Activated T-helper 1 cell treated with anti-CD3 and anti-CD28 coated beads, Interleukin-12 subunit alpha, Interleukin-12 subunit beta, Interleukin-2, Interleukin-4 antibody, amounts not matched to agents 30 ng/mL and 10 ng/mL and 1 ng/mL, durations not matched to agents 14 hours and 24 hours and 36 hours (primary cell): ENCODE measurements at regions of chr4 and their contacts with region 1.

Region 1: DNA sequence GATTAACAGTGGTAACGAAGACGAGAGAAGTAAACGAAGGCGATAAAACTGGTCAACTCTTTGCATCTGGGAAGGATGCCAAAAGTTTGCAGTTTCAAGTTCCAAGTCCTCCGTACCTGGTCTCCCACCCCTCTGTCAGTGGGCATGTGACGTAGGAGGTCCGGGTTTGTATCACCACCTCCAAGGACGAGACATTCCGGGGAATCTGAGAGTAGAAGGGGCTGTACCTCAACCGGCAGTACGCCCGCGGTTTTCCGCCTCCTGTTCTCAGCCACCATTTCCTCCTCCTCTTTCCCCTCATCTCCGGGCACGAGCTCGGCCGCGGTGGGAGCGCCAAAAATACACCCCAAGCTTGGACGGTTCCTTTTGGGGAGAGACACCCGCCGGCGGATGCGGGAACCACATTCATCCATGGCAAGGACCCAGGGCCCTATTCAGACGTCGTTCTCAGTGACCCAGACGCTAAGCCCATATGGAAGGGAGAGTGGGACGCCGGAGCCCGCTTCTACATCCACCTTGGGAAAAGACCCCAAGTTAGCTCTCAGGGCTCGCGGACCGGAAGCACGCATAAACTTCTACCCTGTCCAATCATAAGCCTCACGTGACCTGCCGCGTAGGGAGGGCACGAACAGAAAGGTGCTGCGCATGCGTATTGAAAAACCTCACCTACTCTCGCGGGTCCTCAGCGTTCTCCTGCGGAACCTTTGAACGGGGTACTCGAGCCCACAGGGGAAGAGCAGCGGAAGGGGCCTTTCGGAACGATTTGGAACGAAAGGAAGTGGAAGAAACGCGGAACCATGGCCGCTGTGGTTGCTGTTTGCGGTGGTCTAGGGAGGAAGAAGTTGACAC is at the starts of genes HELQ and MRPS18C:
- DNase-seq: peak; percentile 95
- H3K4me3 Mint-ChIP-seq: peak within 1 kb of the TSS; percentile 96
- H3K27ac Mint-ChIP-seq: peak within 1 kb of the TSS; percentile 98
- H3K4me1 Mint-ChIP-seq: peaks cover 45% of the 10 kb centered on the region
- H3K27me3 Mint-ChIP-seq: no peaks in the 10 kb centered on the region
- total RNA-seq, gene HELQ: 8.8 and 9.7 TPM in 2 replicates
- total RNA-seq, gene MRPS18C: 76.8 and 80.3 TPM in 2 replicates

Region 2: DNA sequence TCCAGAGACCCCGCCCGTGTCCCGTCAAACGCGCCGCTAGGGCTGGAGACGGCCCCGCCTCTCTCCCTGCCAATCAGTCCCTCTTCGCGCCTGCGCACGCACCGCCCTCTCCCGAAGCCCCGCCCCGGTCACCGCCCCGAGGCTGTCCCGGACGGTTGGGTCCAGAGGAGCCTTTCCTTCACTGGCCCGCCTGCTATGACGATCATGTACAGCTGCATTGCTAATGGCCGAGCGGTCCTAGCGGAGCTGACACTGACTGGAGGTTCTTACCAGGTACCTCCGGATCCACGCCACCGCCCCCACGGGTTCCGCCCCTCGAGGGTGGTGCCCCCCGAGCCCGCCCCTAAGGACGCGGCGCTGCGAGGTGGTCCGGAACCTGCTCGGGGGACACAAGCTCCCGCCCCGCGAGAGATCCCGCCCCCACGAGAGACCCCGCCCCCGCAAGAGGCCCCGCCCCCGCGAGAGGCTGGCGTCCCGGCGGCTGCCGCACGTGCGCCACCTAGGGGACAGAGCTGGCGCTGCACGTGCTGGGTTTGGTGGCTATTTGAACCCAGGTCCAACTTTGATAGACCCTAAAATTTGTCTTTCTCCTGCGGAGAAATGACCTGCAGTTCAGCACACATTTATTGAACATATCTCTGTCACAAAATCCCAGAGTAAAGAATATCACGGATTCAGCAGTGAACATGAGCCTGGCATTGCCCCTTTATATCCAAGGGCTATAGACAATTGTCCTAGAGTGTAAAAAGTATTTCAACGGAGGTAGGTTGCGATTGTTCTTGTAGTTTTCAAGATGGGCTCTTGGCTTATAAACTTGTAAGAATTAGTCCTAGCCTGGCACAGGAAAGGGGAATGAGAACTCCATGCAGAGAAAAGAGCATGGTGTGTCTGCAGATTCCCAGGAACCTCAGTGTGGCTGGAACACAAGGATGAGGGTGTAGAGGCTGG is 1170.4 kb before region 1 on chr4:
- intact Hi-C with region 1: loop called (anchors 10 kb)
- DNase-seq: peak; percentile 99
- H3K4me3 Mint-ChIP-seq: peak overlapping the region; percentile 80
- H3K27ac Mint-ChIP-seq: peak overlapping the region; percentile 27
- H3K4me1 Mint-ChIP-seq: peaks cover 14% of the 10 kb centered on the region
- H3K27me3 Mint-ChIP-seq: peaks cover 24% of the 10 kb centered on the region

Region 3: GRCh38 chr4:82865592-82865991 is 589.9 kb before region 1 on chr4:
- intact Hi-C with region 1: loop called (anchors 10 kb)
- DNase-seq: peak; percentile 24
- H3K4me3 Mint-ChIP-seq: no peak overlapping the region
- H3K27ac Mint-ChIP-seq: peak overlapping the region; percentile 91
- H3K4me1 Mint-ChIP-seq: peaks cover 48% of the 10 kb centered on the region
- H3K27me3 Mint-ChIP-seq: no peaks in the 10 kb centered on the region

Region 4: GRCh38 chr4:83034630-83035494 is 420.6 kb before region 1 on chr4 and contains the start of gene COPS4:
- intact Hi-C with region 1: loop called (anchors 1 kb)
- DNase-seq: peak; percentile 95
- H3K4me3 Mint-ChIP-seq: peak within 1 kb of the TSS; percentile 98
- H3K27ac Mint-ChIP-seq: peak within 1 kb of the TSS; percentile 99
- H3K4me1 Mint-ChIP-seq: peaks cover 20% of the 10 kb centered on the region
- H3K27me3 Mint-ChIP-seq: peaks cover 6% of the 10 kb centered on the region
- total RNA-seq, gene COPS4: 35.8 and 38.8 TPM in 2 replicates

Region 5: DNA sequence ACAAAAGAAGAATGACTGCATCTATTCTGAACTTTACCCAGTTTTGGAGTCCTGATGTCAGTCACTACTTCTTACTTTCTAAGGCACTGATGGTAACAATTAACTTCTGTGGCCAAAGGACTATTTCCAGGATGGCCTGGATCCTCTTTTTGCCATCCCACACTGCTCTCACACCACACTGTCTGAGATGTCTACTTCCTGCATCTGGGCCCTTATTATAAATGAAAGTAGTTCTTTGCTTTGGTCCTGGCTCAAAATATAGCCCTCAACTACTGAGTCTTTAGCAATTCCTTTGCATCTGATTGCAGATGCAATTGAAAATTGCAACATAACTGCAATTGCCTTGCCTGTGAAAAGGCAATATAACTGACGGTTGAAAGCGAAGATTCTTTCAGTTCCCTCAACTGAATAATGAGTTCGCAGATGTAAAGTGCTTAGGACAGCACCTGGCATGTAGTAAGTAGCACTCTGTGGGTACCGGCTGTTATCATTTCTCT is 215.1 kb before region 1 on chr4:
- intact Hi-C with region 1: loop called (anchors 5 kb)
- DNase-seq: no peak
- H3K4me3 Mint-ChIP-seq: no peak overlapping the region
- H3K27ac Mint-ChIP-seq: no peak overlapping the region
- H3K4me1 Mint-ChIP-seq: peaks cover 53% of the 10 kb centered on the region
- H3K27me3 Mint-ChIP-seq: peaks cover 49% of the 10 kb centered on the region

Region 6: DNA sequence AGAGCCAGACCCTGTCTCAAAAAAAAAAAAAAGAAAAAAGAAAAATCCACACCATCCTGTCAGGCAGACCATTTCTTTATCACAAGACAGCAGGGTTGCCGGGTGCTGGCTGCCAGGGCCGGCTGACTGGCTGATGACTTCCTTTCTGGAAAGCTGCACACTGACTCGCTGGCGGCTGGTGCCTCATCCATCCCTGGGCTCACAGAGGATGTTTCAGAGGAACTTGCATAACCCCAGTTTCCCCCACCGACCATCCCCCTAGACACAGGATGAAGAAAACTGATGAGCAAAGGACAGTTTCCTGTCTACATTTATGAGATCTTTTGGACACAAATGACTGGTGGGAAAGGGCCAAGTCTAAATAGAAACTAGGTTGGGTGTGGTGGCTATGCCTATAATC is 135.0 kb before region 1 on chr4:
- intact Hi-C with region 1: no loop called
- DNase-seq: no peak
- H3K4me3 Mint-ChIP-seq: no peak overlapping the region
- H3K27ac Mint-ChIP-seq: peak overlapping the region; percentile 61
- H3K4me1 Mint-ChIP-seq: peaks cover 7% of the 10 kb centered on the region
- H3K27me3 Mint-ChIP-seq: no peaks in the 10 kb centered on the region

Region 7: DNA sequence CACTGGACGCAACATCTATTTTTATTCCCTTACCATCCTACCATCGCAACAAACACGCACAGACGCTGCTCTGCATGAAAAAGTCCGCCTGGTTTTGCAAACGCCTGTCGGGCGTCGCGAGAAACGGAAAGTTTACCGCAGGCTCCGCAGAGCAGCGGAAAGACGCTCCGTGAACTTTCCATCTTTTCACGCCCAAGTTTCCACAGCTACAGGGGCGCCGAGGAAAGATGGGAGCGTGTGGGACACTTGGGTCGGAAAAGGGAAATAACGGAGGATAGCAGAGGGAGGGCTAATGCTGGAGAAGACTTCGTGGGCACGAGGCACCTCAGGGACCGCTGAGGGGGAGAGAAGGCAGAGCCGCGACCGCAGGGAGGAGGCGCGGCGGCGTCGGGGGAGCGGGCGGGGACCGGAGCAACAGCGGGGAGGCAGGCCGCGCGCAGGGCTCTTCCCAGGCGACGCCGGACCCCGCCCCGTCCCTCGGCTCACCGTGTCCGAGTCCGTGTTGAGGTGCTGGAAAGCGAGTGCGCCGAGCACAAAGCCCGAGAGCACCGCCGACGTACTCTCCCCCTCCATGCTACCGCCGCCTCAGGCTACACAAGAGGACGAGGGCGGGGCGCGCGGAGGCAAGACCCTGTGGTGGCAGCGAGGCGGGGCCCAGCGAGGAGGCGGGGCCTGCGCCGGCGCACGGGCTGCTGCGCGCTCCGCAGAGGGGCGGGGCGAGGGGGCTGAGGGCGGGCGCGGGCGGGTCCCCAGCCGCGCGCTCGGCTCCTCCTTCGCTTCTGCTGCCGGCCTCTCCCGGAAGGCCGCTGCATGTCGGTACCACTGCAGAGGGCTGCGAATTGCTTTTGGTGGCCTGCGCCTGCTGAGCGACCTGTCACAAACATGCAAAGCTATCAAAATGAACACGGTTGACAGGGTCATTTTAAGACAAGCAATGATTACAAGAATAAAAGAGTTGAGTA is 29.3 kb after region 1 on chr4 and contains the start of gene ABRAXAS1:
- intact Hi-C with region 1: loop called (anchors 1 kb)
- DNase-seq: peak; percentile 91
- H3K4me3 Mint-ChIP-seq: peak within 1 kb of the TSS; percentile 90
- H3K27ac Mint-ChIP-seq: peak within 1 kb of the TSS; percentile 95
- H3K4me1 Mint-ChIP-seq: peaks cover 10% of the 10 kb centered on the region
- H3K27me3 Mint-ChIP-seq: peaks cover under 1% of the 10 kb centered on the region
- total RNA-seq, gene ABRAXAS1: 11.0 and 11.3 TPM in 2 replicates

Region 8: DNA sequence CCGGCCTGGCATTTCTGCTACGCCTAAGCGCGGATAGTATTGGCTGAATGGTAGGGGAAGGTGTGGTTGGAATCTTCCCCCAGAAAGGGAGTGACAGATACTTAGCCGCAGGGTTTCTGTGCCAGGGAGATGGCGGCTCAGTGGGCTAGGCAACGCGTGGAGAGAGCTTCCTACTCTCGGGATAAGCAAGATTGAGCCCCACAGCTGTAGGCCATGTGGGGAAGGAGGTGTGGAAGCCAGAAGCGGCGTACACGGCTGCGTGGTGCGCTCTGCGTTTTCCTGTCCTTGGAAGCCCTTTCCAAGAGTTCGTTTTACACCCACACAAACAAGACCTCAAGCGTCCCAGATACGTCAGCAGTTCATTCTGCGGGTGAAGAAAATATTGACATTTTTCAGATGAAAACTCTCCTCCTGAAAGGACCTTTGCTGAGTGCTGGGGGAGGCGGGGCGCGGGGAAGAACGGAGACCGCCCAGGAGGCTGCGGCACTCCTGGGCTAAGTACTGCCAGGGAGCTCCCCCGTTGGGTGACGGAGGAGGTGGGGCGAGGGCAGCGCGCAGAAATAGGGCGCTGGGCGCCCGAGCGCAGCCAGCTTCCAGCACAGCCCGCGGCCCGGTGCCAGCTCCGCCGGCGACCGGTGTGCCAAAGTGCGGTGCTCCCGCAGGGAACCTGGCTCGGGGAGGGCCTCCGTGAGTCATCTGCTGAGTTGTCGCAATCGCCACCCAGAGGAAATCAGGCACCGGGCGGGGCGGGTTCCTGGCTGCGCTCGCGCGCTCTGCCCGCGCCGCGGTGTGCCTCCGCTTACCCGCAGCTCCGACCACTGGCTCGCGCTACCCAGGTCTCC is 80.2 kb after region 1 on chr4 and contains the start of gene GPAT3:
- intact Hi-C with region 1: no loop called
- DNase-seq: peak; percentile 55
- H3K4me3 Mint-ChIP-seq: peak within 1 kb of the TSS; percentile 83
- H3K27ac Mint-ChIP-seq: peak within 1 kb of the TSS; percentile 12
- H3K4me1 Mint-ChIP-seq: peaks cover 21% of the 10 kb centered on the region
- H3K27me3 Mint-ChIP-seq: peaks cover 47% of the 10 kb centered on the region
- total RNA-seq, gene GPAT3: 5.7 and 6.6 TPM in 2 replicates